CD4-positive, alpha-beta memory T cell (primary cell): ENCODE measurements at regions of chr7 and their contacts with region 1.

Region 1: GRCh38 chr7:43906331-43907010 is at the start of gene URGCP:
- DNase-seq: peak; percentile 42 to 55 (median 51)
- H3K4me3 ChIP-seq: peak within 1 kb of the TSS; percentile 36 to 70
- H3K4me3 Mint-ChIP-seq: peak within 1 kb of the TSS; percentile 94 to 98 (median 97)
- H3K27ac ChIP-seq: peak within 1 kb of the TSS; percentile 62
- H3K27ac Mint-ChIP-seq: peak within 1 kb of the TSS; percentile 84 to 98 (median 96)
- H3K4me1 ChIP-seq: peaks cover 26% of the 10 kb centered on the region
- H3K4me1 Mint-ChIP-seq: peaks cover 22 to 44% (median 32%) of the 10 kb centered on the region in 4 donors
- H3K27me3 ChIP-seq: no peaks in the 10 kb centered on the region
- H3K27me3 Mint-ChIP-seq: no peaks in the 10 kb centered on the region
- total RNA-seq, gene URGCP: 35.5 to 36.1 TPM

Region 2: GRCh38 chr7:43869006-43869866 is 37.2 kb before region 1 on chr7 and contains the start of gene MRPS24:
- CTCF ChIA-PET with region 1: no interaction called
- POLR2A ChIA-PET with region 1: interaction called, 7 read pairs
- intact Hi-C with region 1: loop called (anchors 1 kb)
- DNase-seq: peak; percentile 91 to 94 (median 91)
- H3K4me3 ChIP-seq: peak within 1 kb of the TSS; percentile 79 to 86
- H3K4me3 Mint-ChIP-seq: peak within 1 kb of the TSS; percentile 91 to 97 (median 93)
- H3K27ac ChIP-seq: peak within 1 kb of the TSS; percentile 54
- H3K27ac Mint-ChIP-seq: peak within 1 kb of the TSS; percentile 89 to 95 (median 94)
- H3K4me1 ChIP-seq: peaks cover 20% of the 10 kb centered on the region
- H3K4me1 Mint-ChIP-seq: peaks cover 8 to 31% (median 18%) of the 10 kb centered on the region in 4 donors
- H3K27me3 ChIP-seq: no peaks in the 10 kb centered on the region
- H3K27me3 Mint-ChIP-seq: no peaks in the 10 kb centered on the region
- total RNA-seq, gene MRPS24: 52.2 to 52.7 TPM

Region 3: DNA sequence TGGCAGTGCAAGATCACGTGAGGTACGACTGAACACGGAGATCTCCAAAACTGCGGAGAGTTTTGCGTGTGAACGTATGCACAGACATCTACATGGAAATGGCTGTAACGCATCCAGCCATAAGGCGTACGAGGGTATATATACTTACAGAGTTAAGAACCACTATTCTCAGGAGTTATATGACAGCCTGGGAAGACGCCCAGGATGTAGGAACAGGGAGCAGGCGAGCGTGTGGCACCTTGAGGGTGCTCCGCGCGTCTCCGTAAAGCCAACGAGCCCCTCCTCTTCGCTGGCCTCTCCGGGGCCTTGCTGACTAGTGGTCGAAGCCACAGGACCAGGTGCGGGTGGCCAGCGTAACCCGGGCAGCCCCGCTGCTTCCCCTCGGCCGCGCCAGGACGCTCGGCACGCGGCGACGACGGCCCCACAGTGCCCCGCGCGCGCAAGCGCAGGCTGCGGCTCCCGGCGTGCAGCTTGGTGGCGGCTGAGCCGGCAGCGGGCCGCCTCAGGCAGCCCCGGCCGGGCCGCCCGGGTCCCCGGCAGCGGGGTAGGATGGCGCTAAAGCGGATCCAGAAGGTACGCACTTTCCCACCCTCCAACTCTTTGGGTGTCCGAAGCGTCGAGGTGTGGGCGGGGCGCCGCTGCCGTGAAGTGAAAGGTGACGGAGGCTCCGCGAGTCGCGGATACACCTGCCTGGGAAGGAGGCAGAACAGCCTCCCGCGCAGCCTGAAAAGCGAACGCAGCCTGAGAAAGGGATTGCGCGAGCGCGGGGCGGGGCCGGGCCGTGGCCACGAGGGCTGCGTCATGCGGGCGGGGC is 19.7 kb after region 1 on chr7 and contains the start of gene UBE2D4:
- CTCF ChIA-PET with region 1: no interaction called
- POLR2A ChIA-PET with region 1: interaction called, 18 read pairs
- intact Hi-C with region 1: loop called (anchors 1 kb)
- DNase-seq: peak; percentile 87 to 91 (median 90)
- H3K4me3 ChIP-seq: peak within 1 kb of the TSS; percentile 67 to 86
- H3K4me3 Mint-ChIP-seq: peak within 1 kb of the TSS; percentile 85 to 93 (median 90)
- H3K27ac ChIP-seq: peak within 1 kb of the TSS; percentile 76
- H3K27ac Mint-ChIP-seq: peak within 1 kb of the TSS; percentile 92 to 98 (median 97)
- H3K4me1 ChIP-seq: peaks cover 30% of the 10 kb centered on the region
- H3K4me1 Mint-ChIP-seq: peaks cover 15 to 38% (median 23%) of the 10 kb centered on the region in 4 donors
- H3K27me3 ChIP-seq: no peaks in the 10 kb centered on the region
- H3K27me3 Mint-ChIP-seq: no peaks in the 10 kb centered on the region
- total RNA-seq, gene UBE2D4: 10.9 to 11.0 TPM